Activated T-helper 1 cell treated with anti-CD3 and anti-CD28 coated beads, Interleukin-12 subunit alpha, Interleukin-12 subunit beta, Interleukin-2, Interleukin-4 antibody, amounts not matched to agents 30 ng/mL and 10 ng/mL and 1 ng/mL, durations not matched to agents 14 hours and 24 hours and 36 hours (primary cell): ENCODE measurements at regions of chr19 and their contacts with region 1.

Region 1: GRCh38 chr19:36378625-36379509 is at the start of gene ZFP14:
- DNase-seq: peak; percentile 91
- H3K4me3 Mint-ChIP-seq: peak within 1 kb of the TSS; percentile 86
- H3K27ac Mint-ChIP-seq: peak within 1 kb of the TSS; percentile 73
- H3K4me1 Mint-ChIP-seq: peaks cover 13% of the 10 kb centered on the region
- H3K27me3 Mint-ChIP-seq: no peaks in the 10 kb centered on the region
- total RNA-seq, gene ZFP14: 0.83 and 1.7 TPM in 2 replicates

Region 2: DNA sequence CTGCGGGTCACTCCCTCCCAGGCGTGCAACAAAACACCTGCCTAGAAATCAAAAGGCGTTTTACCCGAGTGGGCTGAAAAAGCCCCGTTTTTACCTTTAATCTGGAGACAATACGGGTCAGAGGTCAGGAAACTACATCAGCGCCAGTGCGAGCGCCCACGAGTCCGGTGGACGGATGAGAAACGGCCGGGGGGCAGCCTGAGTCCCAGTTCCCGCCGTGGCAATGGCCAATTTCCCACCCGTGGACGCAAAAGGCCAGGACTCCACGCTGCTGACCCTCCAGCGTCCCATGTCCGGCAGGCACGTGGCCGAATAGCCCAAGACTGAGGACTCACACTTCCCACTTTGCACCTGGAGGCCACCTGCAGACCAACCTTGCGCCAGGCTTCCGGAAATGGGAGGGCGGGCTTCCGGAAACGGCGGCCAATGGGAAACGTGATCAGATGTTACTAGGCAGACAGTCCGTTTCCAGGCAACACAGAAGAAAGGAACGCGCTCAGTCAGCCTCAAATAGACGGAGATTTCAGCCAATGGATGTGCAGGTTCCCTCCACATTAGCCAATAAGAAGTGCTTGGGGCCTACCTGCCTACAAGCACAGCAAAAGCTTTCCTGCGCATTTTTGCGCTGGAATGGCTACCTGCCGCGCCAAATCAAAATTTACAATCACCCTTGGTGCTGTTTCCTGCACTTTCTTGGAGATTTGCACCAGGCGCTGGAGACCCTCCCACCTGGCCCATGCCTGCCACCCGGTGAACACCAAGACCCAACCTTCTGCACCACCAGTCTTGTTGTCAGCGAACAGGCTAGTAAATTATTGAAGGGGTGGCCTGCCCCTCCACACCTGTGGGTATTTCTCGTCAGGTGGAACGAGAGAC is 47.3 kb before region 1 on chr19:
- intact Hi-C with region 1: loop called (anchors 2 kb)
- DNase-seq: peak; percentile 39
- H3K4me3 Mint-ChIP-seq: peak overlapping the region; percentile 70
- H3K27ac Mint-ChIP-seq: no peak overlapping the region
- H3K4me1 Mint-ChIP-seq: no peaks in the 10 kb centered on the region
- H3K27me3 Mint-ChIP-seq: no peaks in the 10 kb centered on the region

Region 3: GRCh38 chr19:36573020-36573885 is 194.4 kb after region 1 on chr19 and contains the start of gene ZNF529:
- intact Hi-C with region 1: loop called (anchors 1 kb)
- DNase-seq: peak; percentile 85
- H3K4me3 Mint-ChIP-seq: peak within 1 kb of the TSS; percentile 89
- H3K27ac Mint-ChIP-seq: peak within 1 kb of the TSS; percentile 98
- H3K4me1 Mint-ChIP-seq: peaks cover 31% of the 10 kb centered on the region
- H3K27me3 Mint-ChIP-seq: no peaks in the 10 kb centered on the region
- total RNA-seq, gene ZNF529: 20.3 and 20.7 TPM in 2 replicates

Region 4: GRCh38 chr19:36687214-36688056 is 308.6 kb after region 1 on chr19 and contains the start of gene ZNF567:
- intact Hi-C with region 1: loop called (anchors 1 kb)
- DNase-seq: peak; percentile 97
- H3K4me3 Mint-ChIP-seq: peak within 1 kb of the TSS; percentile 95
- H3K27ac Mint-ChIP-seq: peak within 1 kb of the TSS; percentile 91
- H3K4me1 Mint-ChIP-seq: peaks cover 24% of the 10 kb centered on the region
- H3K27me3 Mint-ChIP-seq: peaks cover 2% of the 10 kb centered on the region
- total RNA-seq, gene ZNF567: 5.8 and 8.5 TPM in 2 replicates

Region 5: GRCh38 chr19:37217855-37218591 is 839.2 kb after region 1 on chr19 and contains the start of gene ZNF383:
- intact Hi-C with region 1: loop called (anchors 5 kb)
- DNase-seq: peak; percentile 78
- H3K4me3 Mint-ChIP-seq: peak within 1 kb of the TSS; percentile 96
- H3K27ac Mint-ChIP-seq: peak within 1 kb of the TSS; percentile 90
- H3K4me1 Mint-ChIP-seq: peaks cover 20% of the 10 kb centered on the region
- H3K27me3 Mint-ChIP-seq: no peaks in the 10 kb centered on the region
- total RNA-seq, gene ZNF383: 6.3 TPM in 2 replicates